ENCODE measurements at regions of chr12 and their contacts with region 1.

Region 1: DNA sequence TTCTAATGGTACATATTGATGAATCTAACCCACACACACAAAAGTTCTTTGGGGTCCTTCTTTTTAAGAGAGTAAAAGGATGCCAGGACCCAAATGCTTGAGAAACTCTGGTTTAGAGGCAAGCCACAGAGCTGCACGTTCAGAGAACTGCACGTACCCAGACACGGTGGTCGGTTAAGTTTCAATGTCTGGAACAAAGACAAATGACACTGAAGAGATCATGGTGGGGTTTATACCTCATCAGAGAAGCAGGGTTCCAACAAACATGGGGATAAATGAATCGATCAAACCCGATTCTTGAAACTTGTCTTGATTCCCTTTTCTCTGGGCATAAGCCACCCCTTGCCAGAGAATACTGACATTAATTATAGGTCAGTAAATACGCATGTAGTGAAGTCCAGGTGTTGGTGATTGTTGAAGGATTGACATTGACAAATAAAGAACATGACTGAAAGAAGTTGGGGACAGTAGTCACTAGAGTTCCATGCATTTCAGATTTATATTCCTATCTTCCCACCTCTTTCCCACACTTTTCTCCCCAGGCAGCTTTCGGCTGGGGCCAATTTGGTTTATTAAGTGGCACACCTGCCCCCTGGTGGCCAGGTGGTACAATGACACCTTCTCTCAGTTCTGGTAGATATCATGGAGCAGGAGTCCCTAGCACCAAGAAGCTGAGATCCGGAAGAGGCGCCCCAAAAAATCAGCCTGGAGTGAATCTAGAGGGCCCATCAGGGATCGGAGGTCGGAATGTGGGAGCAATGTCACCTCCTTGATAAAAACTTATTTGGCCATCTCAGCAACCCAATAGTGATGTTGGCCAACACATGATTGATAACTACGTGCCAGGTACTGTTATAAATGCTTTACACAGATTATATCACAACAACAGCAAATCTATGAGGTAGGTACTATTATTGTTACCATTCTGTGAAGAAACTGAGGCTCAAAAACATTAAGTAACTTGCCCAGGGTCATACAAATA is 17.8 kb upstream of the HDAC7 start:
- DNase-seq: peak; percentile 50 to 86 (median 62)
- ATAC-seq: peak; percentile 28
- H3K4me3 ChIP-seq: no peak overlapping the region
- H3K4me3 Mint-ChIP-seq: no peak overlapping the region
- H3K27ac ChIP-seq: no peak overlapping the region
- H3K27ac Mint-ChIP-seq: peak overlapping the region; percentile 7
- H3K4me1 ChIP-seq: peaks cover 48% of the 10 kb centered on the region
- H3K4me1 Mint-ChIP-seq: peaks cover 55% of the 10 kb centered on the region
- H3K27me3 ChIP-seq: no peaks in the 10 kb centered on the region
- H3K27me3 Mint-ChIP-seq: no peaks in the 10 kb centered on the region
- CTCF ChIP-seq: peak; percentile 90

Region 2: DNA sequence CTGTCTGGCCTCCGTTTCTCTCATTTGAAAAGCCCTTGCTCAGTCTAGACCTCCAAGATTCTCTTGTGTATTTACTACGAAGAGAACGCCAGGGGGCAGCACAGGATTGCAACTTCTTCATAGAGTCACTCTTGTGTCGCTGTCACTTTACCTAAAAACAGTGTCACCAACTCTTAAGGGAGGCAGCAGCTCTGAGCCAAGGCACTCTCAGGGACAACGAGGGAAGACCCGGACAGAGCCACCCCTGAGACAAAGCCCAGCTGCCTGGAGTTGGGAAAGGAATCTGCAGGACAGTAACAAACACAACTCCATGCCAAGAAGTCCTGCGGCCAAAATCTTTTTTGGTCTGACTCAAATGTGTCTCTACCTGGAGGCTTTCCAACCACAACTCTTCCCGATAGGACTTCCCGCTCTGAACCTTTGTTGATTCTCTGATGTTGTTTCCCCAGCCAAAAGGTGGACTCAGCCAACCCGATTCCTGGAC is 122.0 kb before region 1 on chr12:
- CTCF ChIA-PET with region 1: interaction called, 19 read pairs
- POLR2A ChIA-PET with region 1: interaction called, 3 read pairs
- intact Hi-C with region 1: loop called (anchors 1 kb)
- DNase-seq: peak; percentile 64 to 91 (median 78)
- ATAC-seq: peak; percentile 72
- H3K4me3 ChIP-seq: no peak overlapping the region
- H3K4me3 Mint-ChIP-seq: peak overlapping the region; percentile 48
- H3K27ac ChIP-seq: no peak overlapping the region
- H3K27ac Mint-ChIP-seq: peak overlapping the region; percentile 21
- H3K4me1 ChIP-seq: peaks cover 31% of the 10 kb centered on the region
- H3K4me1 Mint-ChIP-seq: peaks cover 26% of the 10 kb centered on the region
- H3K27me3 ChIP-seq: no peaks in the 10 kb centered on the region
- H3K27me3 Mint-ChIP-seq: no peaks in the 10 kb centered on the region
- CTCF ChIP-seq: peak; percentile 80

Region 3: GRCh38 chr12:47767216-47767724 is 70.2 kb before region 1 on chr12:
- CTCF ChIA-PET with region 1: interaction called, 20 read pairs
- POLR2A ChIA-PET with region 1: interaction called, 3 read pairs
- intact Hi-C with region 1: no loop called
- DNase-seq: peak; percentile 48 to 86 (median 67)
- ATAC-seq: peak; percentile 80
- H3K4me3 ChIP-seq: no peak overlapping the region
- H3K4me3 Mint-ChIP-seq: no peak overlapping the region
- H3K27ac ChIP-seq: no peak overlapping the region
- H3K27ac Mint-ChIP-seq: no peak overlapping the region
- H3K4me1 ChIP-seq: peaks cover 9% of the 10 kb centered on the region
- H3K4me1 Mint-ChIP-seq: peaks cover 19% of the 10 kb centered on the region
- H3K27me3 ChIP-seq: no peaks in the 10 kb centered on the region
- H3K27me3 Mint-ChIP-seq: no peaks in the 10 kb centered on the region
- CTCF ChIP-seq: peak; percentile 31

Region 4: GRCh38 chr12:47779301-47779942 is 58.1 kb before region 1 on chr12:
- CTCF ChIA-PET with region 1: interaction called, 23 read pairs
- POLR2A ChIA-PET with region 1: interaction called, 5 read pairs
- intact Hi-C with region 1: loop called (anchors 1 kb)
- DNase-seq: peak; percentile 85 to 98 (median 92)
- ATAC-seq: peak; percentile 99
- H3K4me3 ChIP-seq: no peak overlapping the region
- H3K4me3 Mint-ChIP-seq: peak overlapping the region; percentile 26
- H3K27ac ChIP-seq: no peak overlapping the region
- H3K27ac Mint-ChIP-seq: peak overlapping the region; percentile 61
- H3K4me1 ChIP-seq: peaks cover 27% of the 10 kb centered on the region
- H3K4me1 Mint-ChIP-seq: peaks cover 20% of the 10 kb centered on the region
- H3K27me3 ChIP-seq: no peaks in the 10 kb centered on the region
- H3K27me3 Mint-ChIP-seq: no peaks in the 10 kb centered on the region
- CTCF ChIP-seq: peak; percentile 86

Region 5: GRCh38 chr12:47797441-47797840 is 40.0 kb before region 1 on chr12:
- CTCF ChIA-PET with region 1: interaction called, 65 read pairs
- POLR2A ChIA-PET with region 1: interaction called, 6 read pairs
- intact Hi-C with region 1: loop called (anchors 1 kb)
- DNase-seq: peak in 9 of 14 experiments; percentile 17 to 69 (median 44)
- ATAC-seq: peak; percentile 80
- H3K4me3 ChIP-seq: no peak overlapping the region
- H3K4me3 Mint-ChIP-seq: no peak overlapping the region
- H3K27ac ChIP-seq: peak overlapping the region in 1 of 2 donors; percentile 11
- H3K27ac Mint-ChIP-seq: peak overlapping the region; percentile 83
- H3K4me1 ChIP-seq: peaks cover 47% of the 10 kb centered on the region
- H3K4me1 Mint-ChIP-seq: peaks cover 34% of the 10 kb centered on the region
- H3K27me3 ChIP-seq: no peaks in the 10 kb centered on the region
- H3K27me3 Mint-ChIP-seq: no peaks in the 10 kb centered on the region
- CTCF ChIP-seq: peak; percentile 40

Region 6: DNA sequence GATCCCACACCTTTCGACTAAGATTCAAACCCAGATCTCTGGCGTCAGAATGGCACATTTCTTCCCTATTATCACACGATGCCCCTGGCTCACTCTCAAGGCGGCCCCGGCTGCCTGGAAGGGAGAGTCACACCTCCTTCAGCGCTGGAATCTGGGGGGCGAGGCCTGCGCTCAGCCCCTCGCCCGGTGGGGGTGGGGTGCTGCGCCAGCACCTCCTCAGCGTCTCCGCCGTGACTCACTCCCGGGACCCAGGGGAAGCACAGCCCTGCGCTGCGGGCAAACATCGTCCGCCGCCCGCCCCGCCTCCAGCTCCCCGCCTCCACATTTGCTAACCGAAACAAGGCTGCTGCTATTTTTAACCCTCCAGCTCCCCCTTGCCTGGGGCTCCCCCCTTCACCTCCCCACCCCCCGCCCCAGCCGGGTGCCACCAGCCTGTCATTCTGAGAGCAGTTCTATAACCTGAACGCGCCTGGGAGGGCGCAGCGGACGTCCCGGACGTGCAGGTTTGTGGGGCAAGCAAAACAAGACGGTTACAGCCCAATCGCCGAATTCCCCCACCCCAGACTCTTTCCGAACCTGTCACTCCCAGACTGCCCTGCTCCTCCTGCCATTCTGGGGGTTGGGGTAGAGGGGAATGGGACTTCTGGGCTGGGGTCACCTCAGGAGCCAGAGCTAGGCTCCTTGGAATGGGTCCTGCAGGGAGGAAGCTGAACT is 24.5 kb before region 1 on chr12:
- CTCF ChIA-PET with region 1: interaction called, 164 read pairs
- POLR2A ChIA-PET with region 1: interaction called, 274 read pairs
- intact Hi-C with region 1: loop called in 1 of 2 experiments (anchors 1 kb)
- DNase-seq: peak; percentile 81 to 96 (median 92)
- ATAC-seq: peak; percentile 74
- H3K4me3 ChIP-seq: peak overlapping the region; percentile 58
- H3K4me3 Mint-ChIP-seq: peak overlapping the region; percentile 87
- H3K27ac ChIP-seq: peak overlapping the region; percentile 91 to 98
- H3K27ac Mint-ChIP-seq: peak overlapping the region; percentile 96
- H3K4me1 ChIP-seq: peaks cover 99% of the 10 kb centered on the region
- H3K4me1 Mint-ChIP-seq: peaks cover 99% of the 10 kb centered on the region
- H3K27me3 ChIP-seq: no peaks in the 10 kb centered on the region
- H3K27me3 Mint-ChIP-seq: no peaks in the 10 kb centered on the region
- CTCF ChIP-seq: no peak